Activated B cell treated with CpG ODN at 0.5 μM for 24 hours (primary cell): ENCODE measurements at regions of chr1 and their contacts with region 1.

Region 1: GRCh38 chr1:157580179-157580827 is 17.6 kb downstream of the FCRL4 start:
- DNase-seq: no peak
- ATAC-seq: no peak
- H3K4me3 Mint-ChIP-seq: peak overlapping the region; percentile 28
- H3K27ac Mint-ChIP-seq: peak overlapping the region; percentile 78
- H3K4me1 Mint-ChIP-seq: peaks cover 75% of the 10 kb centered on the region
- H3K27me3 Mint-ChIP-seq: no peaks in the 10 kb centered on the region
- CTCF ChIP-seq: peak; percentile 80

Region 2: GRCh38 chr1:157040802-157041201 is 539.5 kb before region 1 on chr1:
- CTCF ChIA-PET with region 1: no interaction called
- POLR2A ChIA-PET with region 1: no interaction called
- intact Hi-C with region 1: no loop called
- DNase-seq: no peak
- ATAC-seq: no peak
- H3K4me3 Mint-ChIP-seq: no peak overlapping the region
- H3K27ac Mint-ChIP-seq: no peak overlapping the region
- H3K4me1 Mint-ChIP-seq: peaks cover 3% of the 10 kb centered on the region
- H3K27me3 Mint-ChIP-seq: peaks cover 52% of the 10 kb centered on the region
- CTCF ChIP-seq: no peak

Region 3: DNA sequence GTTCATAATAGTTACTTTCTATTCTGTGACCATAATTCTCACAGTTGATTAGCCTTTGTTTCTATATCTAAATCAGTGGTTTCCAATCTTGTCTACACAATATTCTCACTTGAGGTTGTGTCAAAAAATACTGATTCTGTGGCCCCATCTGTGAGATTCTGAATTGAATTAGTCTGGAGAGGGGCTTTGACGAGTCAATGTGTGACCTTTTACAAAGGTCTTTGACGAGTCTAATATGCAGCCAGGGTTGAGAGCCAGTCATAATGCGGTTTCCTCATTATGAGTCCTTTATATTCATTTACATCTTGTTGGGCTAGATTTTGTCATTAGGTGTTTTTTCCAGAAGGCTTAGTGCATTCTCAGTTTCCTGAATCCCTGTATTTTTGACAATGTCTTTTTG is 47.7 kb before region 1 on chr1:
- CTCF ChIA-PET with region 1: no interaction called
- POLR2A ChIA-PET with region 1: no interaction called
- intact Hi-C with region 1: no loop called
- DNase-seq: no peak
- ATAC-seq: no peak
- H3K4me3 Mint-ChIP-seq: no peak overlapping the region
- H3K27ac Mint-ChIP-seq: no peak overlapping the region
- H3K4me1 Mint-ChIP-seq: peaks cover 28% of the 10 kb centered on the region
- H3K27me3 Mint-ChIP-seq: no peaks in the 10 kb centered on the region
- CTCF ChIP-seq: no peak

Region 4: GRCh38 chr1:157595356-157595755 is 15.1 kb after region 1 on chr1:
- CTCF ChIA-PET with region 1: interaction called, 33 read pairs
- POLR2A ChIA-PET with region 1: interaction called, 44 read pairs
- intact Hi-C with region 1: loop called (anchors 1 kb)
- DNase-seq: no peak
- ATAC-seq: peak; percentile 53
- H3K4me3 Mint-ChIP-seq: peak overlapping the region; percentile 62
- H3K27ac Mint-ChIP-seq: peak overlapping the region; percentile 30
- H3K4me1 Mint-ChIP-seq: peaks cover 71% of the 10 kb centered on the region
- H3K27me3 Mint-ChIP-seq: no peaks in the 10 kb centered on the region
- CTCF ChIP-seq: no peak

Region 5: DNA sequence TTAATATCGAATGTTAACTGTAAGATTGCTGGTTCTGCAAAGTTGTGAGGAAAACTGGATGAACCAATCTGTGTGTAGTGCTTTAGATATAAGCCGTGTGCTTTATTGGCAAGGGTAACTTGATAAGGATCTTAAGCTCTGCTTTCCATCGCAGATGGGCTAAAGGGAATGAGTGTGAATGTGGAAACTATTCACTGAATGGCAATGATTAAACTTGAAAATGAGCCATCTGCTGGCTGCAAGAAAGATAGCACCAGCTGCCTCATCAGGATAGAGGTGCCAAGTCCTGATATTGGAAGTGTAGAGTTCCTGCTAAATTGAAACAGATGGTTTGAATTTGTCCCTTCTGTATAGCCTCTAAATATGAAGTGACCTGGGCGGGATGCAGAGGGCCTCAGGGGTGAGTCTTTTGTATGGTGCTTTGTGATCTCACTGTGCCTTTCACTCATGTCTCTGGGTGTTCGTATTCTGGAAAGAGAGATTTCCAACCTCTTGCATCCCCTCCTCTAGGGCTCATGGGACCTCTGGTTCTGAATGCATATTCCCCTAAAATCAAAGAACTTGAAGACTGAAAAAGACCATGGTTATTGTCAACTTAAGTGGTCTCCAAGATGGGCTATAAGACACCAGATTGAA is 111.1 kb after region 1 on chr1:
- CTCF ChIA-PET with region 1: interaction called, 123 read pairs
- POLR2A ChIA-PET with region 1: interaction called, 12 read pairs
- intact Hi-C with region 1: loop called (anchors 1 kb)
- DNase-seq: no peak
- ATAC-seq: peak; percentile 62
- H3K4me3 Mint-ChIP-seq: no peak overlapping the region
- H3K27ac Mint-ChIP-seq: peak overlapping the region; percentile 69
- H3K4me1 Mint-ChIP-seq: peaks cover 86% of the 10 kb centered on the region
- H3K27me3 Mint-ChIP-seq: no peaks in the 10 kb centered on the region
- CTCF ChIP-seq: no peak

Region 6: DNA sequence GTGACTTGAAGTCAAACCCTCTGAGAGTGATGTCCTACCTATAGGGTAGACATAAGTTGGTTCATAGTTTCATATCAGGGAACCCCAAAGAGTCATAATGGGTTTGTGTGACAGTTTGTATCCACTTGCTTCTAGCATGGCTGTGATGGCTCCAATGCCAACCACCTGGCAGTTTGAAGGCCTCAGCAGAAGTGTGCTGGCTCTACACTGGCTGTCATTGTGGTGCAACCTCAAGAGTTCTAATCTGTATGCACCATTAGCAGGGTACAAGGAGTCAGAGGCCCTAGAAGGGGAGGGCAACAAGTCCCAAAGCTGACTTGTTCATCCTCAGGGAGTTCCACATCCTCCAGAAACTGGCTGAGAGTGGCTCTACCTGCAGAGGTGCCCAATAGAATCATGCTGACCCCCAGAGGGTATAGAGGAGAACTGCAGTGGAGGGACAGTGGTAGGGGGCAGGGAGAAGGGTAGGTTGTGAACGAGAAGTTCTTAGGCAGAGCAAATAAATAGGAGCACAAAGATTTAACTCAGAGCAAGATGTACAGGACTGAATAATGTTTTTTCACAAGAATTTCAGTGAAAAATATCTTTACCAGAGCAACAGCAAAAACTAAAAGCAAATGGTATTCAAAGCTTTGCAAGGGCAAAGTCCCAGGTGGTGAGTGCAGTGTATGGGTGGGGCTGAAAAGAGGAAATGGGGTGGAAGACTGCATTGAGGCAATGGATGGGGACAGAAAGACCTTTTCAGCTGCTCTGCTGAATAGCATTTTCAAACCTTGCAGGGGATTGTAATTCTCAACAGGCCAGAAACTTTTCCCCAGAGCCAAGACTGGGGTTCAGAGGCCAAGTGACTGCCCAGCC is 193.4 kb after region 1 on chr1:
- CTCF ChIA-PET with region 1: interaction called, 161 read pairs
- POLR2A ChIA-PET with region 1: interaction called, 22 read pairs
- intact Hi-C with region 1: loop called (anchors 1 kb)
- DNase-seq: no peak
- ATAC-seq: peak; percentile 80
- H3K4me3 Mint-ChIP-seq: peak overlapping the region; percentile 79
- H3K27ac Mint-ChIP-seq: peak overlapping the region; percentile 87
- H3K4me1 Mint-ChIP-seq: peaks cover 97% of the 10 kb centered on the region
- H3K27me3 Mint-ChIP-seq: no peaks in the 10 kb centered on the region
- CTCF ChIP-seq: peak; percentile 34

Region 7: DNA sequence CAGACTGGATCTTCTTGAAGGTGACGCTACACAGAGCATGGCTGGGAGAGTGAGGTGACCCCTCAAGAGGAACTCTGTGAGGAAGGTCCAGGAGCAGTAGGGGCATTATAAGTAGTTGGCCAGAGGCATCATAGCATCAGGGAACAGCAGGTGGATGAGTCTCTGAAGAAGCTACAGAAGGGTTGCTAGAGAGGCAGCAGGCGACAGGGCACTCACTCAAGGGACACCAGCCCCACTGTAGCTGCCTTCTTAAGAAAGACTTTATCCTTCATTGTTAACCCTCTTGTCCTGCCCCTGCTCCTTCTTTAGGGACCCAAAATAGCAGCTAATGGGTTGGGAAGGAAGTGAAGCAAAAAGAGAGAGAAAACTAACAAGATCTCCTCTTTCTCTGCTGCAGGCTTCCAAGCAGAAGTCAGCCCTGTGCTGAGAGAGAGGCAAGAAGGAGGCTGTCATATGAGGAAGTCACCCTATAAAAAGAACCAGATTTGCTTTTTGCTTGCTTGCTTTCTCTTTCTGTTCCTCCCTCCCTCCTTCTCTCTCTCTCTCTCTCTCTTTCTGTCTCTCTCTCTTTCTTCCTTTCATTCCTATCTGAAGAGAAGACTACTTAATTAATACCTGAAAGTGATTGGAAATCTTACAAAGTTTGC is 269.0 kb after region 1 on chr1:
- CTCF ChIA-PET with region 1: interaction called, 13 read pairs
- POLR2A ChIA-PET with region 1: interaction called, 3 read pairs
- intact Hi-C with region 1: no loop called
- DNase-seq: no peak
- ATAC-seq: peak; percentile 87
- H3K4me3 Mint-ChIP-seq: peak overlapping the region; percentile 81
- H3K27ac Mint-ChIP-seq: peak overlapping the region; percentile 94
- H3K4me1 Mint-ChIP-seq: peaks cover 64% of the 10 kb centered on the region
- H3K27me3 Mint-ChIP-seq: no peaks in the 10 kb centered on the region
- CTCF ChIP-seq: no peak

Region 8: GRCh38 chr1:158180741-158181576 is 600.7 kb after region 1 on chr1 and contains the start of gene CD1D:
- CTCF ChIA-PET with region 1: no interaction called
- POLR2A ChIA-PET with region 1: no interaction called
- intact Hi-C with region 1: no loop called
- DNase-seq: peak; percentile 41
- ATAC-seq: peak; percentile 11
- H3K4me3 Mint-ChIP-seq: peak within 1 kb of the TSS; percentile 94
- H3K27ac Mint-ChIP-seq: peak within 1 kb of the TSS; percentile 81
- H3K4me1 Mint-ChIP-seq: peaks cover 89% of the 10 kb centered on the region
- H3K27me3 Mint-ChIP-seq: no peaks in the 10 kb centered on the region
- CTCF ChIP-seq: no peak
- total RNA-seq, gene CD1D: 4.6 and 5.0 TPM in 2 replicates

Region 9: GRCh38 chr1:158285756-158286241 is 705.5 kb after region 1 on chr1:
- CTCF ChIA-PET with region 1: no interaction called
- POLR2A ChIA-PET with region 1: no interaction called
- intact Hi-C with region 1: loop called (anchors 10 kb)
- DNase-seq: peak; percentile 68
- ATAC-seq: peak; percentile 73
- H3K4me3 Mint-ChIP-seq: peak overlapping the region; percentile 88
- H3K27ac Mint-ChIP-seq: peak overlapping the region; percentile 99
- H3K4me1 Mint-ChIP-seq: peaks cover 72% of the 10 kb centered on the region
- H3K27me3 Mint-ChIP-seq: no peaks in the 10 kb centered on the region
- CTCF ChIP-seq: no peak